OCI-LY7 (cell line): ENCODE measurements at regions of chr2 and their contacts with region 1.

Region 1: GRCh38 chr2:74267068-74267467 is 68.7 kb downstream of the MTHFD2 start:
- DNase-seq: peak; percentile 68
- H3K4me3 ChIP-seq: no peak overlapping the region
- H3K27ac ChIP-seq: no peak overlapping the region
- H3K4me1 ChIP-seq: no peaks in the 10 kb centered on the region
- CTCF ChIP-seq: peak; percentile 85

Region 2: DNA sequence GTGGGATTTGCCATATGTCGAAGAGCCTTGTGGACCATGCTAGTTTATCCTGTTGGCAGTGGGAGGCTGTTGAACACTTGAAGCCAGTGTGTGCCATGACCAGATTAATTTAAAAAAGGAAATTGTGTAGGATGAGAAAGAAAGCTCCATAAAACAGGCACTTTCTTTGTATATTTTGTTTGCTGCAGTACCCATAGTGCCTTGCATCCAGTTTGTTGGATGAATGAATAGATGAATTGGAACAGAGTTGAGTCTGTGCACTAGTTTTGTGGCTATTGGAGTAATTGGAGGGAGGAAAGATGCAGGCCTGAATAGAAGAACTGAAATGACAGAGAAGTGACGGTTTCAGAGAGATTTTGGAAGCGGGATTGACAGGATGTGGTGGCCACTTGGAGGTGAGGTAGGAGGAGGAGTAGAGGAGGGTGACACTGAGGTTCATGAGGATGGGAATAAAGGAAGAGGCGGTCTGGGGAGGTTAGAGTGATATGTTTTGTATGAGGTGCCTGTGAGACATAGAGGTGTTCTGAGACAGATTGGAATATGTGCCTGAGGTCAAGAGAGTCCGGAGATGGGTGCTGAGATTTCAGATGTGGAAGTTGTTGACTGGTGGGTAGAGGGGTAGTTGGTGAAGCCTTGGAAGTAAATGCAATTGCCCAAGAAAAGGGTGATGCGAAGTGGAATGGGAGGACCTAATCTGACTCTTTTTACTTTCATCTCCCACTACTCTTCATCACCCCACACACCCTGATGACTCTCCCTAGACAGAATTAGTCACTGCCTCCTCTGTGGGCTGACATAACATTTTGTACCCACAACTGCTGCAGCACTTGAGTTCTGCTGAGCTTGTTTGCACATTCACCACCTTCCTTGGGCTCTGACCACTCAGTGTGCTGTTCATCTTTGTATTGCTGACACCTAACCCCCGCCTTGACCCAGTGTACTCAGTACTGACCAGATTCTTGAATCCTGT is 335.3 kb before region 1 on chr2:
- CTCF ChIA-PET with region 1: no interaction called
- POLR2A ChIA-PET with region 1: no interaction called
- intact Hi-C with region 1: no loop called
- DNase-seq: no peak
- H3K4me3 ChIP-seq: no peak overlapping the region
- H3K27ac ChIP-seq: no peak overlapping the region
- H3K4me1 ChIP-seq: peaks cover 27% of the 10 kb centered on the region
- CTCF ChIP-seq: no peak

Region 3: DNA sequence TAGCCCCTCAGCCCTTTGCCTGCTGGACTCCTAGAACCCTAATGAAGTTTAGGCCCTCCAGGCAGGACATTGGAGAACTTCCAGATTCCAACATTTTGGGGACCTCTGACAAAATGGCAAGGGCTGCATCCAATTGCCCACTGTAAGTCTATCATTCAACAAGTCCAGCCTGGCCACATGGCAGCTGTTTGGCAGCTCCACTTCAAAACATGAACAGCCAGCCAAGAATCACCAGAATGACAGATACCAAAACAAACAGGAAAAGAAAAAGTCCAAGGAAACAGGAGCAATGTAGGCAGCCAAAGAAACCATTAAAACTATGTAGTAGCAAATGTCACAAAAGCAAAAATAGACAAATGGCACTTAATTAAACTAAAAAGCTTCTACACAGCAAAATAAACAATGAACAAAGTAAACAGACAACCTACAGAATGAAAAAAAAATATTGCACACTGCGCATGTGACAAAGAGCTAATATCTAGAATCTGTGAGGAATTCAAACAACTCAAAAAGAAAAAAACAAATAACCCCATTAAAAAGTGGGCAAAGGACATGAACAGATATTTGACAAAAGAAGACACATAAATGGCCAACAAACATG is 50.7 kb after region 1 on chr2:
- CTCF ChIA-PET with region 1: no interaction called
- POLR2A ChIA-PET with region 1: no interaction called
- intact Hi-C with region 1: loop called (anchors 5 kb)
- DNase-seq: no peak
- H3K4me3 ChIP-seq: no peak overlapping the region
- H3K27ac ChIP-seq: no peak overlapping the region
- H3K4me1 ChIP-seq: no peaks in the 10 kb centered on the region
- CTCF ChIP-seq: no peak

Region 4: GRCh38 chr2:74334931-74335333 is 67.9 kb after region 1 on chr2:
- CTCF ChIA-PET with region 1: interaction called, 3 read pairs
- POLR2A ChIA-PET with region 1: interaction called, 5 read pairs
- intact Hi-C with region 1: loop called (anchors 1 kb)
- DNase-seq: peak; percentile 72
- H3K4me3 ChIP-seq: no peak overlapping the region
- H3K27ac ChIP-seq: no peak overlapping the region
- H3K4me1 ChIP-seq: no peaks in the 10 kb centered on the region
- CTCF ChIP-seq: peak; percentile 95

Region 5: DNA sequence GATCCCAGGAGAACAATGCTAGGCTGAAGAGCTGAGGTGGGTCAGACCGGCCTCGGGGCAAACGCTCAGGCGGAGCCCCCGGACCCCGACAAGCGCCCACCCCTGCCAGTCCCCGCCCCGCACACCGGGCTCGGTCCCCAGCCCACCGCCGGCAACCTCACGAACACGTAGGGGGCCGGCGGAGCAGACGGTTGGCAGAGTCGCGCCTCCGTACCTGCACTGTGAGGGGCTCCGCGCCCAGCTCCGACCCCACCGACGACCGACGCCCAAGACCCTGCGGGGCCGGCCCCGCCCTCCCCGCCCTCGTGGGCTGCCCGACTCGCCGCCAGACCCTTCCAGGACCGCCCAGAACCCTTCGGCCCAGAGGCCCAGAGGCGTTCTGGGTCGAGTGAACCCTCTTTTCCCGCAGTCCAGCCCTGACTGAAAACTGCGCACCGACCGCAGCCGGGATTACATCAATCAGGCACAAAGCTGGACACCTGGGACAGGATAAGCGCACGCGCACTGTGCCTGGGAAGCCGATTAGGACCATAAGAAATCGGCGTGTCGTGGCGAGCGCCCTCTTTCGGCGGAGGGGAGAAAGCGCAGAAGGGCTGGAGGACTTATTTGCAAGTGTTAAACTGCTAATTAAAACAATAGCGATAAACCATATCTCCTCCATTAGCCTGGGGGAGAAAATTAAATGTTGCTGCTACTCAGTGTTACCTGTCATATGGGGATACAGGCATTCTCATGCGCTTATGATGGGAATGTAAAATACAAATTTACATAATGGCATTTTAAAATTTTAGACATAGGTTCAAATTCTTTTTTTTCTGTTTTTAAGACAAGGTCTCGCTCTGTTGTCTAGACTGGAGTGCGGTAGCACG is 124.7 kb after region 1 on chr2:
- CTCF ChIA-PET with region 1: no interaction called
- POLR2A ChIA-PET with region 1: no interaction called
- intact Hi-C with region 1: loop called (anchors 5 kb)
- DNase-seq: peak; percentile 95
- H3K4me3 ChIP-seq: peak overlapping the region; percentile 89
- H3K27ac ChIP-seq: peak overlapping the region; percentile 46
- H3K4me1 ChIP-seq: peaks cover 8% of the 10 kb centered on the region
- CTCF ChIP-seq: peak; percentile 97